Transverse colon (tissue), 4 donors: ENCODE measurements at regions of chr11 and their contacts with region 1.

Region 1: DNA sequence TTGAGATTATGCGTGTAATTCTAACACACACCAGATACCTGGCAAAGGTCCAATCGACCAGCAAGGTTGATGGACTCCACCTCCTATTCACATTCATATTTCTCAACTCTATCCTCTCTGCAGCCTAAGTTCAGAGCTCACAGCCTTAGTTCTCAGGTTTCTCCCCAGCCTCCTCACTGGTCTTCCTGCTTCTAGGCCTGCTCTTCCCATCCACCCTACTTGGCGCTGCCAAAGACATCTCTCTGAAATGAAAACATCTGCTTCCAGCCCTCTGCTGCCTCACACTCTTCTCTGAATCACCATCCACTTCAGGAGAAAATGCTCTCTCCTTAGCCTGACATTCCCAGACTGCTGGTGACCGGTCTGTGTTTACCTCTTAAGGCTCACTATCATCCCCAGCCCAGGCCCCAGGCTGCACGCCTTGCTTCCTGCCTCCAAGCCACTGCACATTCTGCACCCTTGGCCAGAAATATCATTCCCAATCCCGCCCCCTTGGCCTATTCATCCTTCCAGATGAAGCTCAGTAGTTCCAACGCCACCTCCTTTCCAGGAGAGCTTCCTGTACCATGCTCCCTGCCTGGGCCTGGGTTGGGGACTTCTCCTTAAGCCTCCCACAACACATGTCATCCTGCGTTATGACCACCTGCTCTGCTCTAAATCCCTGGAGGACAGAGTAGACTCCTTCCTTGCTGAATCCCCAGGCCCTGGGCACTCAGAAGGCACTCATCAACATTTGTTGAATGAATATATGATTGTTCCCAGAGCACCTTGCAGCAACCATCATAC is 3.5 kb downstream of the ARRB1 start:
- DNase-seq: no peak
- H3K4me3 ChIP-seq: no peak overlapping the region
- H3K27ac ChIP-seq: peak overlapping the region; percentile 91 to 97 (median 94)
- H3K4me1 ChIP-seq: peaks cover 60 to 88% (median 85%) of the 10 kb centered on the region in 4 donors
- H3K27me3 ChIP-seq: no peaks in the 10 kb centered on the region
- CTCF ChIP-seq: no peak
- EP300 ChIP-seq: no peak
- POLR2A ChIP-seq: no peak

Region 2: GRCh38 chr11:75374661-75375060 is 26.7 kb after region 1 on chr11:
- in situ Hi-C with region 1: no loop called
- intact Hi-C with region 1: loop called (anchors 1 kb)
- DNase-seq: no peak
- H3K4me3 ChIP-seq: no peak overlapping the region
- H3K27ac ChIP-seq: no peak overlapping the region
- H3K4me1 ChIP-seq: peaks cover 12 to 37% (median 22%) of the 10 kb centered on the region in 4 donors
- H3K27me3 ChIP-seq: no peaks in the 10 kb centered on the region
- CTCF ChIP-seq: no peak
- EP300 ChIP-seq: no peak
- POLR2A ChIP-seq: no peak